ENCODE measurements at regions of chr18 and their contacts with region 1.

Region 1: GRCh38 chr18:54224379-54225014 is at the start of gene MBD2:
- DNase-seq: peak; percentile 95
- H3K4me3 ChIP-seq: peak within 1 kb of the TSS; percentile 47 to 62 (median 62)
- H3K27ac ChIP-seq: peak within 1 kb of the TSS; percentile 45 to 92 (median 71)
- H3K4me1 ChIP-seq: peaks cover 26 to 28% of the 10 kb centered on the region in 2 donors
- H3K27me3 ChIP-seq: no peaks in the 10 kb centered on the region
- CTCF ChIP-seq: peak in 2 of 6 experiments; percentile 8 to 45
- POLR2A ChIP-seq: peak; percentile 21 to 86
- total RNA-seq, gene MBD2: 81.4 to 96.3 (median 88.8) TPM

Region 2: GRCh38 chr18:53991202-53991601 is 233.3 kb before region 1 on chr18:
- intact Hi-C with region 1: no loop called
- DNase-seq: no peak
- H3K4me3 ChIP-seq: no peak overlapping the region
- H3K27ac ChIP-seq: no peak overlapping the region
- H3K4me1 ChIP-seq: no peaks in the 10 kb centered on the region
- H3K27me3 ChIP-seq: no peaks in the 10 kb centered on the region
- CTCF ChIP-seq: no peak
- POLR2A ChIP-seq: no peak

Region 3: GRCh38 chr18:54119524-54120019 is 104.9 kb before region 1 on chr18:
- intact Hi-C with region 1: no loop called
- DNase-seq: no peak
- H3K4me3 ChIP-seq: no peak overlapping the region
- H3K27ac ChIP-seq: no peak overlapping the region
- H3K4me1 ChIP-seq: peaks cover 3 to 5% of the 10 kb centered on the region in 2 donors
- H3K27me3 ChIP-seq: no peaks in the 10 kb centered on the region
- CTCF ChIP-seq: peak; percentile 39 to 76 (median 58)
- POLR2A ChIP-seq: no peak

Region 4: GRCh38 chr18:54269893-54270844 is 45.7 kb after region 1 on chr18:
- intact Hi-C with region 1: loop called (anchors 5 kb)
- DNase-seq: peak; percentile 67 to 68
- H3K4me3 ChIP-seq: peak overlapping the region; percentile 48 to 67 (median 48)
- H3K27ac ChIP-seq: peak overlapping the region; percentile 87 to 96 (median 93)
- H3K4me1 ChIP-seq: peaks cover 9 to 14% of the 10 kb centered on the region in 2 donors
- H3K27me3 ChIP-seq: no peaks in the 10 kb centered on the region
- CTCF ChIP-seq: peak; percentile 13 to 52 (median 34)
- POLR2A ChIP-seq: no peak